ENCODE measurements at regions of chr15 and their contacts with region 1.

Region 1: GRCh38 chr15:32659340-32660155 is 18.0 kb downstream of the SCG5 start:
- DNase-seq: no peak
- ATAC-seq: no peak
- H3K4me3 Mint-ChIP-seq: no peak overlapping the region
- H3K27ac Mint-ChIP-seq: no peak overlapping the region
- H3K4me1 Mint-ChIP-seq: peaks cover 8% of the 10 kb centered on the region
- H3K27me3 Mint-ChIP-seq: no peaks in the 10 kb centered on the region
- CTCF ChIP-seq: no peak

Region 2: DNA sequence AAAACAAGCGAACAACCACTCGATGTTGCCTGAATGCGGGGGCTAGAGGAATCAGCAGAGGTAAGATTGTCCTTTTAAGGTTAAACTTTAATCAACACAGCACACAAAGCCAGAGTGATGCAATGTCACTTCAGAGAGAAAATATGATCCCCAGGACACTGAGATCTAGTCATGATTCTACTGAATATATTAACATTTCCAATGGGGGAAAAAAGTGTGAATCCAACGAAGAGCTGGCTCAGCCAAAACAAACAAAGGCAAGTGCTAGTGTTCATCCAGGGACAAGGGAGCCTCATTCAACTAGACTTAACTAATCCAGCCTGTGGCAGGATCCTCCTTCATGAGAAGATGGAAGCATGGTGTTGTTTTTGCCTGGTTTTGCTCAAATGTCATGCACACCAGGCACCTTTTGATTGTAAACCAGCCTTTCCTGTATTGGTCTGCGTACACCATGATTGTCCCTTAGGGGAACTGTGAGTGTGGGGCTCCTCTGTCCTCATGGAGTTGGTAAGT is 17.7 kb after region 1 on chr15:
- CTCF ChIA-PET with region 1: interaction called, 11 read pairs
- POLR2A ChIA-PET with region 1: no interaction called
- intact Hi-C with region 1: no loop called
- DNase-seq: no peak
- ATAC-seq: no peak
- H3K4me3 Mint-ChIP-seq: no peak overlapping the region
- H3K27ac Mint-ChIP-seq: no peak overlapping the region
- H3K4me1 Mint-ChIP-seq: no peaks in the 10 kb centered on the region
- H3K27me3 Mint-ChIP-seq: no peaks in the 10 kb centered on the region
- CTCF ChIP-seq: no peak

Region 3: DNA sequence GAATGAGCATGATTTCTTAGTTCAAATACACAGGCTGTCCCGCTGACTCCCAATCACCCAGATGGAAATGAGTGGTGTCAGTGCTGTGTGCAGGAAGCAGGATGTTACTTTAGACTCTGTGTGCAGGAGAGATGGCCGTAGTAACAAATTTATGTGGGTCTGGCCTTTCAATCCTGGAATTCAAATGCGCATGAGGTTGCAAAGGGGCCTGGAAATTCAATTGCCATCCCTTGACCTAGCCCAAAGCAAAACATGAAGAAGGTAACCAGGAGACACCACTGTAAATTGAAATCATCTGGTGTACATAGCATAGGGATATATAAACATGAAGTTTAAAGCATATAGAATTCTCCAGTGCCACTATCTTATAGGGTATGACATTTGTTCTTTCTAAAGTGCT is 91.4 kb after region 1 on chr15:
- CTCF ChIA-PET with region 1: no interaction called
- POLR2A ChIA-PET with region 1: no interaction called
- intact Hi-C with region 1: no loop called
- DNase-seq: no peak
- ATAC-seq: no peak
- H3K4me3 Mint-ChIP-seq: no peak overlapping the region
- H3K27ac Mint-ChIP-seq: no peak overlapping the region
- H3K4me1 Mint-ChIP-seq: no peaks in the 10 kb centered on the region
- H3K27me3 Mint-ChIP-seq: peaks cover 4% of the 10 kb centered on the region
- CTCF ChIP-seq: no peak

Region 4: DNA sequence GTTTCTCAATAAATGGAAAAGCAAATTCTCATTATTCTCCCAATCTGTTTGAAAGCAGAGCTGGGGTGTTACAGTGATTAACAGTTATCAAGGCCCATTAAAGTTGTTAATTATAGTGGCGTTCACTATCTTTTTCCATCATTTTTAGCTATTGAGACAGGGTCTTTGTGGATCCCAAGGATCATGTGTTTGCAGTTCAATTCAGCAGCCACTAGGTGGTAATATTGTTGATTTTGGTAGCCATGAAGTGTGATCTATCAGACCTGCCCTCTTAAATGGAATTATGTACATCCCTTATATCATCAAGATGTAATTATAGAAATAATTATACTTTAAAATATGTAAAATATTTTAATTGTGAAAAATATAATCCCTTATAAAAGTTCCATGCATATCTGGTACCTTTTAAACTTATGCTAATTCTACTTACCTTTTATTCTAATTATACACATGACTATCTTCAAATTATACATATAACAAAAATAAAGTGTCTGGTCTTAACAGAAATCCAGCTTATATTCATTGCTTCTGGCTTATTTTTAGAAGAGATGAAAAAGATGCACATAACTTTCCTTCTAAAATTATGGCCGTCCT is 184.7 kb after region 1 on chr15:
- CTCF ChIA-PET with region 1: interaction called, 16 read pairs
- POLR2A ChIA-PET with region 1: no interaction called
- intact Hi-C with region 1: no loop called
- DNase-seq: no peak
- ATAC-seq: no peak
- H3K4me3 Mint-ChIP-seq: no peak overlapping the region
- H3K27ac Mint-ChIP-seq: no peak overlapping the region
- H3K4me1 Mint-ChIP-seq: no peaks in the 10 kb centered on the region
- H3K27me3 Mint-ChIP-seq: peaks cover 4% of the 10 kb centered on the region
- CTCF ChIP-seq: peak; percentile 63

Region 5: DNA sequence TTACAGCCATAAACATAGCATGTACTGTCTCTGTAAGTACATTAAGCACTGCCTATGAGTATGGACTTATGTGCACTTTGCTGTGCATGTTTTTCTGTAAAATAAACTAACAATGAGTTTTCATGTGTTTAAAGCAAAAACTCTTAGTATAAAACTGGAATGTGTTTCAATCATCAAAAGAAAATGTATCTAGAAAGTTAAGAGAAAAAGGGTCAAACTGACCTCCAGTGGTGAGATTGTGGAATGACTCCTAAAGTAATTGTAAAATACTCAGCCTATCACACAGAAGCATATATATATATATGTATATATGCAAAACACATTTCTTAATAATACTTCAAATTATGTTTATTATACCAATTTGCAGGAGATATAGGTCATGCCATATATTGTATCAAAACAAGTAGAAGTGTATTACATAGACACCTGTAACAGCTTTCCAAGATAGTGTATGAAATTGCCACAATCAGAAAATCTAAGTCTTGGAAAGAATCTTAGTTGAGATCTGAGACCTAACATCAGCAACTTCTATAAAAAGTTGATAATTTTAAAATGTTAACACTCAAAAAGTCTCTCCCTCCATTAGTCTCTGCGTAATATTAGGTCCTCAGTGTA is 335.4 kb after region 1 on chr15:
- CTCF ChIA-PET with region 1: interaction called, 7 read pairs
- POLR2A ChIA-PET with region 1: no interaction called
- intact Hi-C with region 1: loop called (anchors 5 kb)
- DNase-seq: no peak
- ATAC-seq: no peak
- H3K4me3 Mint-ChIP-seq: no peak overlapping the region
- H3K27ac Mint-ChIP-seq: no peak overlapping the region
- H3K4me1 Mint-ChIP-seq: no peaks in the 10 kb centered on the region
- H3K27me3 Mint-ChIP-seq: peaks cover 5% of the 10 kb centered on the region
- CTCF ChIP-seq: peak; percentile 70